ENCODE measurements at regions of chr12 and their contacts with region 1.

Region 1: GRCh38 chr12:40691913-40692764 is at the start of gene CNTN1:
- DNase-seq: peak; percentile 24
- H3K4me3 ChIP-seq: peak within 1 kb of the TSS; percentile 32 to 60 (median 40)
- H3K27ac ChIP-seq: no peak within 1 kb of the TSS
- H3K4me1 ChIP-seq: peaks cover 0 to 8% (median 4%) of the 10 kb centered on the region in 4 donors
- H3K27me3 ChIP-seq: peaks cover 35% of the 10 kb centered on the region
- CTCF ChIP-seq: no peak
- EP300 ChIP-seq: no peak
- POLR2A ChIP-seq: no peak
- total RNA-seq, gene CNTN1: 0.60 to 3.2 (median 1.4) TPM

Region 2: GRCh38 chr12:39972119-39972518 is 720.0 kb before region 1 on chr12:
- in situ Hi-C with region 1: no loop called
- intact Hi-C with region 1: loop called (anchors 10 kb)
- DNase-seq: no peak
- H3K4me3 ChIP-seq: no peak overlapping the region
- H3K27ac ChIP-seq: no peak overlapping the region
- H3K4me1 ChIP-seq: peaks cover 0 to 11% (median 0%) of the 10 kb centered on the region in 4 donors
- H3K27me3 ChIP-seq: no peaks in the 10 kb centered on the region
- CTCF ChIP-seq: no peak
- EP300 ChIP-seq: no peak
- POLR2A ChIP-seq: no peak